Activated CD4-positive, alpha-beta memory T cell treated with anti-CD3 and anti-CD28 coated beads for 36 hours (primary cell): ENCODE measurements at regions of chr6 and their contacts with region 1.

Region 1: DNA sequence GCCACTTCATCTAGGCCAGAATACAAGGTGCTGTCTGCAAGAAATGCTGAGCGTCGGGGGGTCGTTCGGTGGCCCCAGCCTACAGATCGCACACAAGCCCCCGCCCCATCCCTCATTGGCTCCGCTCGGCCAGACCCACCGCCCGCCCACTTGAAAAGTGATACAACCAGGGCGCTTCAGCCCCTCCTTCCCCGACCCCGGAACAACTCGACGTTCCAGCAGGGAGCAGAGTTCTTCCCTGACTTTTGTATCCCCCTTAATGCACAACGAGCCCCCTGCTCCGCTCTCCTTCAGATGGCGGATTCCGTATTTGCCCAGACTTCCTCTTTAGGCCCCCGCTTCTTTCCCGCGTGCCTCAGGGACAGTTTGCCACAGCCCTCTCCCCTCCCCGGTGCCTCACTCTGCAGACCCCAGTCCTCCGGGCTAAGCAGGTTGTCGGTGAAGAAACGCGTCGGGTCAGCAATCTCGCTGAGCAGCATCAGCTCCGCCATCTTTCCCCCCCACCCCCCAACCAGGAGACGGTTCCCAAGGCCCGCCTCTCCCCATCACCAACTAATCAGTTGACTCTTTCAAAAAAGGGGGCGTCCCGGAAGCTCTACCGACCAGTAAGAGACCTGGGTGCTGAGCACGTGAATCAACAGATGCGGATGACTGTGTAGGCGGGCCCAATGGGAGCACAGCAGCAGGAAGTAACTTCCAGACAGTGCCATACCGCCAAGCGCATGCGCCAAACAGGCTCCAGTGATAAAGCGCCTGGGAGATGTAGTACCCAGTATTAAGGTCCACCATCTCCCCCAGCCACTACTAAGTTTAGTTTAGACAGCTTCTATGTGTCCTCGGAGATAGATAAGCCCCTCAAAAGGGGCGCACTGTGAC is at the start of gene ATF6B:
- DNase-seq: peak; percentile 99
- H3K4me3 Mint-ChIP-seq: peak within 1 kb of the TSS; percentile 99
- H3K27ac Mint-ChIP-seq: peak within 1 kb of the TSS; percentile 96
- H3K4me1 Mint-ChIP-seq: peaks cover 40% of the 10 kb centered on the region
- H3K27me3 Mint-ChIP-seq: no peaks in the 10 kb centered on the region
- total RNA-seq, gene ATF6B: 67.4 to 80.9 TPM

Region 2: DNA sequence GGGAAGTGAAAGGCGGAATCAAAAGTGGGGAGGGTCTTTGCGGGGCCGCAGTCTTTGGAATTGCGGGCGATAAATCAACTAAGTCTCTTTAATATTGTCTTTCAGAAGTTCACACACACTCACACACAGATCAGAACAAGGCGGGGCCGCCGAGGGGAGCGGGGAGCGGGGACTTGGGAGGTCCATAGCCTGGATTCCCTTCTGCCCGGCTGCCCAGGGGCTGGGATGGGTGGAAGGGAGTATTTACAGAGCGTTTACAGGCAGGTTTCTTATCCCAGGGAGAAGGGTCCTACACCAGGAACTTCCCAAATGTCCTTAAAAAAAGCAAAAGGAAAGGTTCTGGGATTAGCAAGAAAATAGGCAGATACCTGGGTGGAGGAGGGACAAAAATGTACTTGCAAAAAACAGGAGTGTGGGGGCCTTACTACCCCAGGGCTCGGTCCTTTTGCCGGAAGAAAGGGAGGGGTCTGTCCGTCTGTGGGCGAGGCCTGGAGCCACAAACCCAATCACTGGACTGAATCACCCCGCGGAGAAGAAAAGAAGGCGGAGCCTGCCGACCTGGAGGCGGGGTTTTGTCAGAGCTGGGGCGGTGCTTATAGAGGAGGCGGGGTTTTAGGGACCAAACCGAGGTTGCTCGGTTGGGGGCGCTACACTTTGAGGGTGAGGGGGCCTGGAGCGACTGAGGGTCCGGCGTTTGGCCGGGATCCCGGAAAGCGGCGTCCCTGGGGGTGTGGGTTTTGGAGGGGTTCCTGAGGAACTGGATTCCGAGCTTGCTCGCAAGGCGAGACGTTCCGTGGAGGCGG is 20.5 kb after region 1 on chr6:
- CTCF ChIA-PET with region 1: interaction called, 4 read pairs
- POLR2A ChIA-PET with region 1: no interaction called
- intact Hi-C with region 1: loop called (anchors 1 kb)
- DNase-seq: peak; percentile 87
- H3K4me3 Mint-ChIP-seq: peak overlapping the region; percentile 76
- H3K27ac Mint-ChIP-seq: no peak overlapping the region
- H3K4me1 Mint-ChIP-seq: peaks cover 28% of the 10 kb centered on the region
- H3K27me3 Mint-ChIP-seq: peaks cover 30% of the 10 kb centered on the region

Region 3: GRCh38 chr6:32153564-32154513 is 25.9 kb after region 1 on chr6 and contains the start of gene PPT2:
- CTCF ChIA-PET with region 1: interaction called, 10 read pairs
- POLR2A ChIA-PET with region 1: interaction called, 6 read pairs
- intact Hi-C with region 1: loop called (anchors 1 kb)
- DNase-seq: peak; percentile 87
- H3K4me3 Mint-ChIP-seq: peak within 1 kb of the TSS; percentile 98
- H3K27ac Mint-ChIP-seq: peak within 1 kb of the TSS; percentile 79
- H3K4me1 Mint-ChIP-seq: peaks cover 35% of the 10 kb centered on the region
- H3K27me3 Mint-ChIP-seq: peaks cover 17% of the 10 kb centered on the region
- total RNA-seq, gene PPT2: 9.5 to 9.9 TPM

Region 4: DNA sequence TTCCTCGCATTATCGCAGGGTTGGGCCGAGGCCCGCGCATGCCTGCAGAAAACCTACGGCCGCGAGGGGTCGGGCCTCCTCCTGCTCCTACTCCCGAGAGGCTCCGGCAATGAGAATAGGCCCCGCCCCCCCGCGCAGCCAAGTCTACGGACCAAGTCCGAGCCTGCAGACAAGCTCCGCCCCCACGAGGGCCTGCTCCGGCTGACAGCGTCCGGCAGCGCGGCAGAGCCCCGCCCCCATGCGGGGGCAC is 67.6 kb after region 1 on chr6:
- CTCF ChIA-PET with region 1: interaction called, 21 read pairs
- POLR2A ChIA-PET with region 1: interaction called, 16 read pairs
- intact Hi-C with region 1: loop called (anchors 1 kb)
- DNase-seq: peak; percentile 100
- H3K4me3 Mint-ChIP-seq: peak overlapping the region; percentile 96
- H3K27ac Mint-ChIP-seq: peak overlapping the region; percentile 98
- H3K4me1 Mint-ChIP-seq: peaks cover 23% of the 10 kb centered on the region
- H3K27me3 Mint-ChIP-seq: no peaks in the 10 kb centered on the region